ENCODE measurements at regions of chr1 and their contacts with region 1.

Region 1: GRCh38 chr1:206663832-206664652 is 20.7 kb upstream of the MAPKAPK2 start:
- DNase-seq: no peak
- ATAC-seq: peak; percentile 94
- H3K4me3 ChIP-seq: peak overlapping the region; percentile 44; the same call in 1 of the 2 replicates
- H3K27ac ChIP-seq: no peak overlapping the region
- H3K4me1 ChIP-seq: peaks cover 10% of the 10 kb centered on the region
- H3K27me3 ChIP-seq: no peaks in the 10 kb centered on the region
- CTCF ChIP-seq: peak; percentile 81 to 85 (median 84)
- EP300 ChIP-seq: no peak
- POLR2A ChIP-seq: no peak
- RAD21 ChIP-seq: peak; percentile 89

Region 2: DNA sequence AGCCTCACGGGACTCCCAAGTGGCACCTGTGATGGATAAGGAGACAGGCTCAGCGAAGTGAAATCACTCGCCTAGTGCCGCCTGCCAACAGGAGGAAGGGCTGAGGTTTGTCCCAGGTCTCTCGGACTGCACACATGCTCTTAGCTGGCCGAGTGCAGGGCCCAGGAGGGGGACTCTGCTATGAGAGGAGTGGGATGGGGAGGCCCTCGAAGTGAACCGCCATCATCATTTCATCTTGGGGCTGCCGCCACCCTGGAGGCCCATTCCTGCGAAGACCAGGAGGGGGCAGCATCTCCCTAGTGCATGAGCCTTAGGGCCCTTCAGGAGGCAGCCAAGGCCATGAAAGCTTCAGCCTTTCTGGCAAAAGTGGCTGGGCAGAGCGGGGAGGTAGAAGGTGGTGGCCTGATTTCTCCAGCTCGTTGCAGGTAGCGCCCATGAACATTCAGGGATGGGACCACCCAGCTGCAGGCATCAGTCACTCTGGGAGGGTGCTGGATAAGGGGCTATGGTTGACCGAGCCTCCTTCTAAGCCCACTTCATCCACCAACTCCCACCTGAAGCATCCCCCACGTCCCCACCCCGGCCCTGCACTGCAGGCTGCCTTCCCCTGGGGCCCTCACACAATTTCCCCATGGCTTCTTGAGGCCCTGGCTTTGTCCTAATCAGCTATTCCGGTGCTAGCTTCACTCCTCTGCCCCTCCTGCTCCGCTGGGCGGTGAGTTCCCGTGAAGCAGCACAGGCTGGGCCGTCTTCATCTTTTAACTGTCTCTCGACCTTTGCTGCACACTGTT is 173.9 kb before region 1 on chr1:
- CTCF ChIA-PET with region 1: interaction called, 22 read pairs
- POLR2A ChIA-PET with region 1: interaction called, 4 read pairs
- RAD21 ChIA-PET with region 1: interaction called, 10 read pairs
- SMC1A ChIA-PET with region 1: interaction called, 15 read pairs
- in situ Hi-C with region 1: no loop called
- intact Hi-C with region 1: loop called (anchors 5 kb)
- DNase-seq: no peak
- ATAC-seq: peak; percentile 99
- H3K4me3 ChIP-seq: no peak overlapping the region
- H3K27ac ChIP-seq: no peak overlapping the region
- H3K4me1 ChIP-seq: peaks cover 5% of the 10 kb centered on the region
- H3K27me3 ChIP-seq: no peaks in the 10 kb centered on the region
- CTCF ChIP-seq: peak; percentile 91 to 97 (median 96)
- EP300 ChIP-seq: no peak
- POLR2A ChIP-seq: no peak
- RAD21 ChIP-seq: peak; percentile 97

Region 3: GRCh38 chr1:206583707-206584648 is 80.1 kb before region 1 on chr1:
- CTCF ChIA-PET with region 1: interaction called, 12 read pairs
- POLR2A ChIA-PET with region 1: no interaction called
- RAD21 ChIA-PET with region 1: interaction called, 6 read pairs
- SMC1A ChIA-PET with region 1: interaction called, 10 read pairs
- in situ Hi-C with region 1: no loop called
- intact Hi-C with region 1: no loop called
- DNase-seq: no peak
- ATAC-seq: peak; percentile 67
- H3K4me3 ChIP-seq: no peak overlapping the region
- H3K27ac ChIP-seq: no peak overlapping the region
- H3K4me1 ChIP-seq: peaks cover 28% of the 10 kb centered on the region
- H3K27me3 ChIP-seq: no peaks in the 10 kb centered on the region
- CTCF ChIP-seq: peak; percentile 82 to 92 (median 90)
- EP300 ChIP-seq: no peak
- POLR2A ChIP-seq: no peak
- RAD21 ChIP-seq: peak; percentile 92

Region 4: DNA sequence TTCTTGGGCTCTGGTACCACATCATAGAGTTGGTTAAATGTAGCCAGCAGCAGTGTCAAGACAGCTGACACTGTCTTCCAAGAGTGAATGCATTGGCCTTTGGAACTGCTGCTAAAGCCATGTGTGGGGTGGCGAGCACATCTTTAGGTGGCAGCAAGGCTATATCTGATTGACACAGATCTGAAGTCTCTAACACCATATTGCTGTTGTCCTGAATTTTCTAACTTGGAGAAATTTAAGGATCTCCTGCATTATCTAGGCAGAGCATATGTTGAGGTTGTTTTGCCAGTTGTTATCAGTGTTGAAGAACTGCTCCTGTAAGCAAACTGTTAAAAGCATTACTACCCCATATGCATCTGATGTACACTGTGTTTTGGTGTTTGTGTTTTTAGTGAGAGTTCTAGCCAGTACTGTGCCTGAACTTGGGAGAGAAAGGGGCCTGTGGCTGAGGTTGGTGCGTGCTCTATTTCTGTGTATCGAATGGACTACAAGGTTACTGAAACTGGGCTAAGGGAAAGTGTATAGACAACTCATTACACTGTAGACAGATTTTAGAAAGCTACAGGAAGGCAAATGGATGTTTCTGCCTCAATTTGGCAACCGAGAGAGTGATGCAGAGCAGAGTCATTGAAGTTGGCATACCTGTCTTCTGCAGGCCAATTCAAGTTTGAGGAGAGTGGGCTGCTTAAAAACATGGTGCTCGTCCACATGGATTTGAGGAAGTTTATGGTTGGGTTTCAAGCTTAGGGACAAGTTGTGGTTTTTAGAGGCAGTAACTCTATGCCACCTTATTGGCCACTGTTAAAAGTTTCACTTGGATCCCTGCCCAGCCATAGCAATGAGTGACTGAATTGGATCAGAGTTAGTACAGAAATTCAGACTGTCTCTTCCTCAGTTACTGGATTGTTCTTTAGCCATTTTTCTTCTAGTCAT is 11.8 kb before region 1 on chr1:
- CTCF ChIA-PET with region 1: interaction called, 172 read pairs
- POLR2A ChIA-PET with region 1: interaction called, 6 read pairs
- RAD21 ChIA-PET with region 1: interaction called, 30 read pairs
- SMC1A ChIA-PET with region 1: interaction called, 139 read pairs
- in situ Hi-C with region 1: no loop called
- intact Hi-C with region 1: no loop called
- DNase-seq: no peak
- ATAC-seq: peak; percentile 30; the same call in 2 of the 3 replicates
- H3K4me3 ChIP-seq: no peak overlapping the region
- H3K27ac ChIP-seq: no peak overlapping the region
- H3K4me1 ChIP-seq: no peaks in the 10 kb centered on the region
- H3K27me3 ChIP-seq: no peaks in the 10 kb centered on the region
- CTCF ChIP-seq: no peak
- EP300 ChIP-seq: no peak
- POLR2A ChIP-seq: no peak
- RAD21 ChIP-seq: no peak

Region 5: DNA sequence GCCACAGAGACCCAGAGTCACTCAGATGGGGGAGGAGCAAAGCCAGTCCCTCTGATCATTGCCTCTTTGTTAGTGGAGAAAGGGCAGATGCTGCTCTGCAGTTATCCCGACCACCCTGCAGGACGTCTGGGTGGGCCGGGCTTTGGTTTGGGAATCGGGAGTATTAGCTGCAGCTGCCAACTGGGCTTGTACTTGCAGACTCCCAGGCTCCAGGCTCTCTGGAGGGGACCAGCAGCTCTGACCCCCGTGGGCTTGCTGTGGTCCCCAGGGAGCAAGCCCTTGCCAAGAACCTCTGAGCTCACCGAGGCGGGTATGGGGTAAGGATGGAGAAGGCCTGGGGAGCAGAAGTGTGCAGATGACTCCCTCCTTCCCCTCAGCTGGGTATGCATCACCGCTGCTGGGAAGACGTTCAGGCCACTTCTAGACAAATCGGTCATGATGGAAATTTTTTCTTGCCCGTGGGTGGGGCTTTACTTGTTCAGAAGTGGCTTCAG is 42.3 kb after region 1 on chr1:
- CTCF ChIA-PET with region 1: interaction called, 41 read pairs
- POLR2A ChIA-PET with region 1: interaction called, 4 read pairs
- RAD21 ChIA-PET with region 1: interaction called, 15 read pairs
- SMC1A ChIA-PET with region 1: interaction called, 51 read pairs
- in situ Hi-C with region 1: no loop called
- intact Hi-C with region 1: no loop called
- DNase-seq: no peak
- ATAC-seq: no peak
- H3K4me3 ChIP-seq: no peak overlapping the region
- H3K27ac ChIP-seq: no peak overlapping the region
- H3K4me1 ChIP-seq: peaks cover 60% of the 10 kb centered on the region
- H3K27me3 ChIP-seq: no peaks in the 10 kb centered on the region
- CTCF ChIP-seq: no peak
- EP300 ChIP-seq: no peak
- POLR2A ChIP-seq: no peak
- RAD21 ChIP-seq: no peak

Region 6: DNA sequence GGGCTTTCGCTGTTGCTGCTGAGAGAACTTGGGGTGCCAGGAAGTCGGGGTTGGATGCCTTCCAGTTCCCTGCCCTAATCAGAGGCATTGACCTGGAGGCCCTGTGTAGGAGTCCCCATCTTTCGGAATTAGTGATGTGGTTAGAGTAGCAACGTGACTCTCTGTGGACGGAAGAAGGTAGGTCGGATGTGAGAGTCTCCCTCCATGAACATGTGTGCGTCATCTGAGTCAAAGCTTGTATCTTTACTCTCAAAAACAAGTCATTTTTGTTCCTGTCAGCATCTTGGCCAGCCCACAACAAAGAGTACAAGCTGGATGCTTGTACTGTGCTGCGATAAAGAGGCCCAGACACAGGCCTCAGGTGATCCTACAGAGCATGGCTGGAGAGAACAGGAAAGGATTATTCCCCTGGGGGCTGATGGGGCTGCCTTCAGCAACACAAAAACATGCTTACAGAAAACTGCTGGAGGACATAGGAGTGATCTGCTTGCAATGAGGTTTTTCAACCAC is 139.2 kb after region 1 on chr1:
- CTCF ChIA-PET with region 1: interaction called, 35 read pairs
- POLR2A ChIA-PET with region 1: interaction called, 3 read pairs
- RAD21 ChIA-PET with region 1: interaction called, 21 read pairs
- SMC1A ChIA-PET with region 1: interaction called, 52 read pairs
- in situ Hi-C with region 1: no loop called
- intact Hi-C with region 1: no loop called
- DNase-seq: peak; percentile 98
- ATAC-seq: peak; percentile 97
- H3K4me3 ChIP-seq: no peak overlapping the region
- H3K27ac ChIP-seq: peak overlapping the region; percentile 55
- H3K4me1 ChIP-seq: peaks cover 20% of the 10 kb centered on the region
- H3K27me3 ChIP-seq: no peaks in the 10 kb centered on the region
- CTCF ChIP-seq: no peak
- EP300 ChIP-seq: peak; percentile 98 to 99
- POLR2A ChIP-seq: peak; percentile 26; the same call in 1 of the 2 replicates
- RAD21 ChIP-seq: peak; percentile 9; the same call in 1 of the 2 replicates